AG04450 (cell line): ENCODE measurements at regions of chr5 and their contacts with region 1.

Region 1: DNA sequence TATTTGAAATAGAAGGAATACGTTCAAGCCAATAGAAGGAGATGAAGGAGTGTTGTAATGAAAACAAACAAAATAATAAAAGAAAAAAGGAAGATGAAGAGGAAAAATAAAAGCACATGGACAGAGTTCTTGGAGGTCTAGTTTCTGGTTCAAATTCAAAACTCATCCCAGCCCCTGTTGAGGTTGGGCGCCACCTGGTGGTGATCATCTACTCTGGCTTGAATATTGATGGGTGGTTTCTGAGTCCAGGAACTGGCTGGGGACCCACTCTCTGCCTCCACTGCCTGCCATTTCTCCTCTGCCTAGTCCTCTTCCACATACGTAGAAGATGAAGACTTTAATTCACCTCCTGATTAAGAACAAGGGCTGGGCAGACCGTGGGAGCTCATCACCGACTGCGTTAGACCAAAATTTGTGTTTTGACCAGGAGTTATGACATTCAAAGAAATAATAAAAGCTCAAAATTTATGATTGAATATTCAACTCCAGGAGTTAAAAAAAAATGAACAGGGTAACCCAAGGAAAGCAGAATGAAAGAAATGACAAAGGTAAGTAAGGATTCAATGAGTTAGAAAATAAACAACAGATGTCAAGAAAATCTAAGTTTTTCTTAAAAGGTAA is 99.0 kb upstream of the SLC1A3 start:
- DNase-seq: no peak
- H3K4me3 ChIP-seq: no peak overlapping the region
- H3K27ac ChIP-seq: no peak overlapping the region
- H3K27me3 ChIP-seq: no peaks in the 10 kb centered on the region
- CTCF ChIP-seq: peak; percentile 94

Region 2: DNA sequence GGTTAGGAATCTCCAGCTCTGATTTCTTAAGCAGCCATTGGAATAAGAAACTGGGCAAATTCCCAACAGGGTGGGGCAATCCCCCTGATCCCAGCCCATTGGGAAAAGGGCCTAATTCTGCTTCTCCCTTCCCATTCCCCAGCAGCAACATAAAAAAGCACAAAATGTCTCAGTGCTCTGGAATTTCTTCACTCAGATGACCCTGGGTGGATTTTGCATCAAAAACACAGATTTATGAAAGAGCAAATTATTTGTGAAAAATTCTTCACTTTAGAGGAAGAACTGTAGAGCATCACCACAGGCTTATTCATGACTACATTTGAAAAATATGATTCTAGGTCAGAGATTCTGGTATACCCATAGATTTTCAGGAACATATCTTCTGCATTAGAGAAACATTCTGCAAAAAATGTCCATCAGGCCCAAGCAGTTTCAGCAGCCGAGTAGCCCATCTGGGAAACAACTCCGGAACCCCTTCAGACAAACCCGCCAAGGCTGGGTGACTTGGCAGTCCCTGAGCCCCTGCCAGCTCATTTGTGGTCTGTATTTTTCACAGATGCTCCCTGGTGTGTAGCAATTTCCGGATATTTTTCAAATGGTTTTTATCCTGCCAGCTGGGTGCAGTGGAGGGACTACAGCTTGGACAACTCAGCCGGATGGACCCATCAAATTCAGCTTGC is 103.7 kb before region 1 on chr5:
- CTCF ChIA-PET with region 1: interaction called, 12 read pairs
- POLR2A ChIA-PET with region 1: no interaction called
- DNase-seq: peak; percentile 11
- H3K4me3 ChIP-seq: no peak overlapping the region
- H3K27ac ChIP-seq: peak overlapping the region; percentile 31
- H3K27me3 ChIP-seq: no peaks in the 10 kb centered on the region
- CTCF ChIP-seq: no peak

Region 3: DNA sequence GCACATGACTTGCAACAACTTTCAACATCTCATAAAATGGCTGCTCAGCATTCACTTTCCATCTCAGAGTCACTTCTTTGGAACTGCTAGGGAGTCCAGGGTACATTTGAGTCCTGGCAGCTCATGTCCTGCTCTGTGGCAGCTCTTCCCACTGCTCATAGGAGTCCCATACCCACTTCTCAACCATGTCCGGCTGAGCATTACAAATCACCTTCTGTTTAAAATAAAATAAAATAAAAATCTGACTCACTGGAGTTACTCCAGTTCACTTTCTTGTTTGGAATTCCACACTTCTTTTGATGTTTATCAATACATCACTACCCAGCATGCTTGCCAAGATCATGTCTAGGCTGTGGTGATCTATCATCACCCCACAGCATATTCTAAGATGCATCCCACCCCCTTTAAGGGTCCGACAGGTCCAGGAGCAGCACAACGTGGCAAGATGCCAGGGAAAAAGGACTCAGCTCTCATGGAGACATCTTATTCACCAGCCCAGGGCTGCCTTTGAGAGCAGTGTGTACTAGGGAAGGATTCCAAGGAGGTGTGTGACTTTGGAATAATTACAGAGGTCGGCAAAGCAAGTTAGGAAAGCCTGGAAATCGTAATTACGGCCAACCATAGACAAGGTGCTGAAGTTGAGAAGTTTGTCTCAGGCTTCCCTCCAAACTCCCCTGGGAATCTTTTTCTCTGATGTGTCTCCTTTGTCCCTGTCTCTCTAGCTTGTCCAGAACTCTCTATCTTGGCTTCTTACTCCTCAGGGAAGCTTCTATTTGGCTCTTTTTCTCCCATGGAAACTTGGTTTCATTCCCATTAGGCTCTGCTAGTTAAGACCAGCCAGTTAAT is 12.5 kb before region 1 on chr5:
- CTCF ChIA-PET with region 1: interaction called, 42 read pairs
- POLR2A ChIA-PET with region 1: interaction called, 9 read pairs
- DNase-seq: no peak
- H3K4me3 ChIP-seq: no peak overlapping the region
- H3K27ac ChIP-seq: peak overlapping the region; percentile 52
- H3K27me3 ChIP-seq: peaks cover 4% of the 10 kb centered on the region
- CTCF ChIP-seq: no peak

Region 4: GRCh38 chr5:36690041-36690961 is 182.9 kb after region 1 on chr5:
- CTCF ChIA-PET with region 1: interaction called, 165 read pairs
- POLR2A ChIA-PET with region 1: no interaction called
- DNase-seq: peak; percentile 33
- H3K4me3 ChIP-seq: peak overlapping the region; percentile 64
- H3K27ac ChIP-seq: no peak overlapping the region
- H3K27me3 ChIP-seq: no peaks in the 10 kb centered on the region
- CTCF ChIP-seq: peak; percentile 97